Activated CD4-positive, alpha-beta T cell treated with anti-CD3 and anti-CD28 coated beads for 36 hours (primary cell): ENCODE measurements at regions of chr5 and their contacts with region 1.

Region 1: GRCh38 chr5:141618804-141619554 is at the start of gene DIAPH1:
- DNase-seq: peak; percentile 99
- ATAC-seq: peak; percentile 88
- H3K4me3 Mint-ChIP-seq: peak within 1 kb of the TSS; percentile 98
- H3K27ac Mint-ChIP-seq: peak within 1 kb of the TSS; percentile 98
- H3K4me1 Mint-ChIP-seq: peaks cover 64% of the 10 kb centered on the region
- H3K27me3 Mint-ChIP-seq: no peaks in the 10 kb centered on the region
- total RNA-seq, gene DIAPH1: 185 to 212 TPM

Region 2: GRCh38 chr5:141320225-141321169 is 298.5 kb before region 1 on chr5 and contains the start of gene TAF7:
- CTCF ChIA-PET with region 1: no interaction called
- POLR2A ChIA-PET with region 1: no interaction called
- intact Hi-C with region 1: loop called in 1 of 2 experiments (anchors 1 kb)
- DNase-seq: peak; percentile 96
- ATAC-seq: peak; percentile 96
- H3K4me3 Mint-ChIP-seq: peak within 1 kb of the TSS; percentile 91
- H3K27ac Mint-ChIP-seq: peak within 1 kb of the TSS; percentile 100
- H3K4me1 Mint-ChIP-seq: peaks cover 23% of the 10 kb centered on the region
- H3K27me3 Mint-ChIP-seq: peaks cover 2% of the 10 kb centered on the region
- total RNA-seq, gene TAF7: 45.2 to 54.4 TPM

Region 3: GRCh38 chr5:141598391-141599350 is 20.3 kb before region 1 on chr5:
- CTCF ChIA-PET with region 1: interaction called, 261 read pairs
- POLR2A ChIA-PET with region 1: interaction called, 10 read pairs
- intact Hi-C with region 1: no loop called
- DNase-seq: no peak
- ATAC-seq: peak; percentile 91
- H3K4me3 Mint-ChIP-seq: no peak overlapping the region
- H3K27ac Mint-ChIP-seq: peak overlapping the region; percentile 51
- H3K4me1 Mint-ChIP-seq: peaks cover 74% of the 10 kb centered on the region
- H3K27me3 Mint-ChIP-seq: no peaks in the 10 kb centered on the region

Region 4: GRCh38 chr5:141636413-141637122 is 17.6 kb after region 1 on chr5 and contains the starts of genes HDAC3 and RELL2:
- CTCF ChIA-PET with region 1: interaction called, 161 read pairs
- POLR2A ChIA-PET with region 1: interaction called, 17 read pairs
- intact Hi-C with region 1: loop called (anchors 1 kb)
- DNase-seq: peak; percentile 97
- ATAC-seq: peak; percentile 82
- H3K4me3 Mint-ChIP-seq: peak within 1 kb of the TSS; percentile 92
- H3K27ac Mint-ChIP-seq: peak within 1 kb of the TSS; percentile 92
- H3K4me1 Mint-ChIP-seq: peaks cover 45% of the 10 kb centered on the region
- H3K27me3 Mint-ChIP-seq: no peaks in the 10 kb centered on the region
- total RNA-seq, gene HDAC3: 85.9 to 88.6 TPM
- total RNA-seq, gene RELL2: 24.3 to 27.8 TPM

Region 5: DNA sequence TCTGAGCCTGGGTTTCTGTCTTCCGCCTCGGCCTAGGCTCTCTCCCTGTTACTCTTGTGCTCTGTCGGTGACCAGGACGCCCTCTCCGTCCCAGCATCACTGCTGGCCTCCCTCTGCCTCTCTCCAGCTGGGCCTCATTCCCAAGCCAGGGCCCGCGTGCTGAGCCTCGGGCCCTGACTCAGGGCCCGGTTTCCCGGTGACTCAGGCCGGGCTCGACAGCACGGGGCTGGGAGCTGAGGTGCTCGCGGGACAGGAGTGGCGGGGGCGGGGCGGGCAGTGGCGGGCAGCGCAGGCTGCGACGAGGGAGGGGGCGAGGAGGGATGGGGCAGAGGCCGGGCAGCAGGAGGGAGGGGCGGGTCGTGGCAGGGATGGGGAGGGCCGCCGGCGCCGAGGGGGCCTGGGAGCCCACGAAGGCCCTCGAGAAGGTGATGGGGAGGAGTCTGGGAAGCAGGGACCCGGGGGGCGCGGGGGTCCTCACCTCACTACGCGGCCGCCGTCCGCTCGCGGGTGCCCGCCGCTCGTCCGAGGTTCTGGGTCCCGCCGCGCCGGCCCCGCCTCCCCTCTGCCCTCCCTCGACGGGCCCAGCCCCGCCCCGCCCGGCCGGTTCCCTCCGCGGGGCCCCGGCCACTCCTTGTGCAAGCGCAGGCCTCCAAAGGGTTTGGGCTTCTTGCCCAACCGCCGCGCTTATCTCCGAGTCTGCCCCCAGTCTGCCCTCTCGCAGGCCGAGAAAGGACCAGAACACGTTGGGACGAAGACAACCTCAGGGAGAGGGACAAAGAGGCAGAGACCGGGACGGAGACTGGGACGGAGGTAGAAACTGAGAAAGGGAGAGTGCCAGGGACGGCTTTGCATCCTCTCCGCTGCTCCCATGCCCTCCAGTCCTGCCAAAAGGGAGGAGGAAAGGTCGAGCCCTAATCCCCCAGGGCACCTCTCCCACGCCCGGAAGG is 63.0 kb after region 1 on chr5 and contains the start of gene ARAP3:
- CTCF ChIA-PET with region 1: no interaction called
- POLR2A ChIA-PET with region 1: no interaction called
- intact Hi-C with region 1: no loop called
- DNase-seq: peak; percentile 59
- ATAC-seq: peak; percentile 63
- H3K4me3 Mint-ChIP-seq: peak within 1 kb of the TSS; percentile 60
- H3K27ac Mint-ChIP-seq: peak within 1 kb of the TSS; percentile 62
- H3K4me1 Mint-ChIP-seq: peaks cover 19% of the 10 kb centered on the region
- H3K27me3 Mint-ChIP-seq: peaks cover 3% of the 10 kb centered on the region
- total RNA-seq, gene ARAP3: 3.2 TPM

Region 6: GRCh38 chr5:142108432-142109330 is 489.7 kb after region 1 on chr5 and contains the start of gene NDFIP1:
- CTCF ChIA-PET with region 1: no interaction called
- POLR2A ChIA-PET with region 1: no interaction called
- intact Hi-C with region 1: loop called in 1 of 2 experiments (anchors 10 kb)
- DNase-seq: peak; percentile 93
- ATAC-seq: peak; percentile 86
- H3K4me3 Mint-ChIP-seq: peak within 1 kb of the TSS; percentile 95
- H3K27ac Mint-ChIP-seq: peak within 1 kb of the TSS; percentile 99
- H3K4me1 Mint-ChIP-seq: peaks cover 67% of the 10 kb centered on the region
- H3K27me3 Mint-ChIP-seq: no peaks in the 10 kb centered on the region
- total RNA-seq, gene NDFIP1: 54.9 to 86.7 TPM